Natural killer cell (primary cell): ENCODE measurements at regions of chr4 and their contacts with region 1.

Region 1: DNA sequence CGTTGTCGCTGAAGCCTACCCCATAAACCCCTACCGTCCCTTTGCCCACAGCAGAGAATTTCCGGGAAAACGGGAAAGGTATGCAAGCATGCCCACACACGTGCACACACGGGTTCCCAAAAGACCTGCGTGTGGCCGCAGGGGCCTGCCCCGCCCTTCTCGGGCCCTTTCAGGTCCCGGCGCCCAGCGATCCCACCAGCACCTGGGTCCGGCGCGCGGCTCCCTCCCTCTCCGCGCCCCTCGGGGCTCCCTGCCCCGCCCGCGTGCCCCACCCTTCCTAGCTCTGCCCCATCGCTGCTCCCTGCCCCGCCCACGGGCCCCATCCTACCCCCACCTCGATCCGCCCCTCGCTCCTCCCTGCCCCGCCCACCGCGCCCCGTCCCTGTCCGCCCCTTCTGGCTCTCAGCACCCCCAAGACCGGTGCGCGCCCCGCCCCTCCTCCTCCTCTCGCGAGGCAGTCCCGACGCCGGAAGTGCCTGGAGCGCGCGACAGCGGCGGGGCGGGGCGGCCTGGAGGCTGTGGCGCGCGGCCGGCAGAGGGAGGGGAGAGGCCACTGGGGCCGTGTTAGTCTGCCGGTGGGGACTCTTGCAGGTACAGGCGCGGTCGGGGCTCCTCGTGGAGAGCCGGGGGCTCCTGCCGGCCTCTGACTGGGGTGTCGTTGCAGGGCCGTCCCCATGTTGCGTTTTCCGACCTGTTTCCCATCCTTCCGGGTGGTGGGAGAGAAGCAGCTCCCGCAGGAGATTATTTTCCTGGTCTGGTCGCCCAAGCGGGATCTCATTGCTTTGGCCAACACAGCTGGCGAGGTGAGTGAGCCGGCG is at the start of gene ANAPC4:
- DNase-seq: peak; percentile 88 to 96
- ATAC-seq: peak; percentile 97 to 99 (median 97)
- H3K4me3 ChIP-seq: peak within 1 kb of the TSS; percentile 96
- H3K4me3 Mint-ChIP-seq: no peak within 1 kb of the TSS
- H3K27ac ChIP-seq: peak within 1 kb of the TSS; percentile 55
- H3K27ac Mint-ChIP-seq: peak within 1 kb of the TSS in 1 of 2 donors; percentile 27
- H3K4me1 ChIP-seq: peaks cover 18% of the 10 kb centered on the region
- H3K4me1 Mint-ChIP-seq: peaks cover 5 to 11% of the 10 kb centered on the region in 2 donors
- H3K27me3 ChIP-seq: no peaks in the 10 kb centered on the region
- H3K27me3 Mint-ChIP-seq: no peaks in the 10 kb centered on the region
- CTCF ChIP-seq: no peak
- total RNA-seq, gene ANAPC4: 42.0 to 51.3 (median 49.5) TPM

Region 2: GRCh38 chr4:24584175-24584850 is 792.6 kb before region 1 on chr4 and contains the start of gene DHX15:
- intact Hi-C with region 1: loop called (anchors 5 kb)
- DNase-seq: peak; percentile 90 to 98
- ATAC-seq: peak; percentile 92 to 98 (median 95)
- H3K4me3 ChIP-seq: peak within 1 kb of the TSS; percentile 97
- H3K4me3 Mint-ChIP-seq: peak within 1 kb of the TSS; percentile 99
- H3K27ac ChIP-seq: peak within 1 kb of the TSS; percentile 96
- H3K27ac Mint-ChIP-seq: peak within 1 kb of the TSS; percentile 94 to 97
- H3K4me1 ChIP-seq: peaks cover 21% of the 10 kb centered on the region
- H3K4me1 Mint-ChIP-seq: peaks cover 37 to 40% of the 10 kb centered on the region in 2 donors
- H3K27me3 ChIP-seq: no peaks in the 10 kb centered on the region
- H3K27me3 Mint-ChIP-seq: no peaks in the 10 kb centered on the region
- CTCF ChIP-seq: no peak
- total RNA-seq, gene DHX15: 174 to 180 (median 179) TPM

Region 3: GRCh38 chr4:25065475-25065874 is 311.5 kb before region 1 on chr4:
- intact Hi-C with region 1: no loop called
- DNase-seq: no peak
- ATAC-seq: no peak
- H3K4me3 ChIP-seq: no peak overlapping the region
- H3K4me3 Mint-ChIP-seq: no peak overlapping the region
- H3K27ac ChIP-seq: no peak overlapping the region
- H3K27ac Mint-ChIP-seq: no peak overlapping the region
- H3K4me1 ChIP-seq: no peaks in the 10 kb centered on the region
- H3K4me1 Mint-ChIP-seq: no peaks in the 10 kb centered on the region
- H3K27me3 ChIP-seq: no peaks in the 10 kb centered on the region
- H3K27me3 Mint-ChIP-seq: peaks cover 3 to 10% of the 10 kb centered on the region in 2 donors
- CTCF ChIP-seq: no peak

Region 4: DNA sequence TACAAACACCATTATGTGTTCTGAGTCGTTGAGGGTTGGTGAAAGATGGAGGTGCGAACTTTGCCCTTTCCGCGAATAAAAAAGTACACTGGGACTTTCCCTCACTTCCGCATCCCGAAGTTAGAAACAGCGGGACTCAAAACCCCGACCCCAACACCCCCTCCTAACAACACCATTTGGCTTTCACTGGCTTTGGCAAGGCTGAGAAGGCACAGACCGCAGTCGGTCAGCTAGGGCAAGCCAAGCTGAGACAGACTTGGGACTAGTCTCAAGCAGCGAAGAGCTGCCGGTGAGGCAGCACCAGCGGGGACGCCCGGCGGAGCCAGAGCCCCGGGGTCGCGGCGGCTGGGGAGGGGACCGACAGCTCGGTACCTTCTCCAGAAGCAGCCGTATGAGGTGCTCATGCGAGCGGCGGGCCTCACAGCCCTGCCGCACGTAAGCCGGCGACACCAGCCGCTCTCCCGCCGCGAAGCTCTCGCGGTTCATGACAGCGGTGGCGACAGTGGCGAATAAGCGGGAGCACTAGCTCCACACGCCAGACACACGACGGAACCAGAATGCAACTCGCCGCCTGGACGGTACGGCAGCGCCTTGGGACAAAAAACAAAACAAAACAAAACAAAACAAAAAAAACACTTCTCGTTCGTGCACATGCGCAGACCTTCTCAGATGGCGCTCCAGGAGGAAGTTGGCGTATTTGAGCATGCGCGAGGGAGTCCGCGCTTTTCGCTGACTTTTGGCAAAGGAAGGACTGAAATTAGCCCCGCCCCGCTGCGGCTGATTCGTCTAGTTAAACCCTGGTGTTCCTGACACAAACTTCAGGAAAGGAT is 216.9 kb before region 1 on chr4 and contains the start of gene SEPSECS:
- intact Hi-C with region 1: loop called (anchors 10 kb)
- DNase-seq: peak; percentile 87 to 99
- ATAC-seq: peak; percentile 74 to 91 (median 85)
- H3K4me3 ChIP-seq: peak within 1 kb of the TSS; percentile 86
- H3K4me3 Mint-ChIP-seq: peak within 1 kb of the TSS; percentile 87
- H3K27ac ChIP-seq: peak within 1 kb of the TSS; percentile 97
- H3K27ac Mint-ChIP-seq: peak within 1 kb of the TSS; percentile 94 to 97
- H3K4me1 ChIP-seq: peaks cover 17% of the 10 kb centered on the region
- H3K4me1 Mint-ChIP-seq: peaks cover 44 to 51% of the 10 kb centered on the region in 2 donors
- H3K27me3 ChIP-seq: no peaks in the 10 kb centered on the region
- H3K27me3 Mint-ChIP-seq: no peaks in the 10 kb centered on the region
- CTCF ChIP-seq: no peak
- total RNA-seq, gene SEPSECS: 18.5 to 26.6 (median 20.7) TPM

Region 5: GRCh38 chr4:25223802-25224375 is 153.1 kb before region 1 on chr4:
- intact Hi-C with region 1: no loop called
- DNase-seq: peak in 1 of 2 donors; percentile 53
- ATAC-seq: no peak
- H3K4me3 ChIP-seq: no peak overlapping the region
- H3K4me3 Mint-ChIP-seq: no peak overlapping the region
- H3K27ac ChIP-seq: no peak overlapping the region
- H3K27ac Mint-ChIP-seq: peak overlapping the region in 1 of 2 donors; percentile 56
- H3K4me1 ChIP-seq: no peaks in the 10 kb centered on the region
- H3K4me1 Mint-ChIP-seq: no peaks in the 10 kb centered on the region
- H3K27me3 ChIP-seq: no peaks in the 10 kb centered on the region
- H3K27me3 Mint-ChIP-seq: no peaks in the 10 kb centered on the region
- CTCF ChIP-seq: no peak

Region 6: DNA sequence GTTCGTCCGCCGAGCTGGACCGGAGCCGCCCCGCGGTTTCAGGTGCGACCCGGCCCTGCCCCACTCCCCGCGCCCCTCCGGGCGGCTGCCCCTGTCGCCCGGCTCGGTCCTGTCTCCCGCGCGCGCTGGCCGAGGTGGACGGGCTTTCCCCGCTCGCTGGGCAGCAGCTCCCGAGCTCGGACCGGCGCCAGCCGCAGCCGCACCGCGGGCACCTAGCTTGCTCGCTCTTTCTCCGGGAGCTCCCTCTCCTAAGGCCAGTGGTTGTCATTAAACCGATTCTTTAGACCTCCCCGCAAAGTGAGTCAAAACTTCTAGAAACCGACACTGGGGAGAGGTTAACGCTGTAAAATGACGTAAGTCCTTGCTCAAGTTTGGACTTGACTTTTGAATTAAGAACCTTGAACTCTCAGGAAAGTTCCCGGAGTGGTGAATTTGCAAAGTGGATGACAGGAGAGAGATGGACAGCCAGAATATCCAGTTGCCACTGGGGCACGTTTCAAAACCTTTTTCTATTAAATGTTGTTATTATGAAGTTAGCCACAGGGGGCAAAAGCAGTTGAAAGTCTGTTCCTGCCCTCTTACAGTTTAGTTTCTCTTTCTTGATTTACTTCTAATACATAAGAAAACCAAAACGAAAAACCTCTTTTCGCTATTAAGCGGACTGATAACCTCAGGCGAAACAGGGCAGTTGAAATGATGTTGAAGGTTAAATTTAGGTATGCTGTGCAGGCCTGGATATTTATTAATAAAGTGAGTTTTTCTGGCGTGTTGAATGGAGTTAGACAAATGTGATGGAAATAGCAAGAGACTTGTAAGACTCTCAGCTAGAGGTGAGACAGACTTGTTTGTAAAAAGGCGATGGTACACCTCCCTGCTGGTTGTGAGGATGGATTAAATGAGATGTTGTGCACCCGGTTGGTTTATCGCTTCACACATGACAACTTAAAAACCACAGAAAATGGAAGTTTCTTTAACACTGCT is 142.3 kb before region 1 on chr4:
- intact Hi-C with region 1: loop called (anchors 2 kb)
- DNase-seq: peak; percentile 47 to 83
- ATAC-seq: peak; percentile 64 to 81 (median 69)
- H3K4me3 ChIP-seq: peak overlapping the region; percentile 93
- H3K4me3 Mint-ChIP-seq: peak overlapping the region; percentile 100
- H3K27ac ChIP-seq: peak overlapping the region; percentile 89
- H3K27ac Mint-ChIP-seq: peak overlapping the region; percentile 99 to 100
- H3K4me1 ChIP-seq: peaks cover 17% of the 10 kb centered on the region
- H3K4me1 Mint-ChIP-seq: peaks cover 33 to 39% of the 10 kb centered on the region in 2 donors
- H3K27me3 ChIP-seq: no peaks in the 10 kb centered on the region
- H3K27me3 Mint-ChIP-seq: no peaks in the 10 kb centered on the region
- CTCF ChIP-seq: peak; percentile 57

Region 7: GRCh38 chr4:25312496-25313200 is 64.3 kb before region 1 on chr4 and contains the start of gene ZCCHC4:
- intact Hi-C with region 1: loop called (anchors 1 kb)
- DNase-seq: peak; percentile 94 to 97
- ATAC-seq: peak; percentile 99 to 100 (median 99)
- H3K4me3 ChIP-seq: peak within 1 kb of the TSS; percentile 63
- H3K4me3 Mint-ChIP-seq: peak within 1 kb of the TSS; percentile 99
- H3K27ac ChIP-seq: peak within 1 kb of the TSS; percentile 60
- H3K27ac Mint-ChIP-seq: peak within 1 kb of the TSS; percentile 93 to 99
- H3K4me1 ChIP-seq: peaks cover 8% of the 10 kb centered on the region
- H3K4me1 Mint-ChIP-seq: peaks cover 12 to 18% of the 10 kb centered on the region in 2 donors
- H3K27me3 ChIP-seq: no peaks in the 10 kb centered on the region
- H3K27me3 Mint-ChIP-seq: peaks cover 0 to 7% of the 10 kb centered on the region in 2 donors
- CTCF ChIP-seq: peak; percentile 100
- total RNA-seq, gene ZCCHC4: 9.4 to 12.0 (median 10.9) TPM